Psoas muscle (tissue), 8 donors: ENCODE measurements at regions of chr12 and their contacts with region 1.

Region 1: GRCh38 chr12:108514973-108515814 is at the start of gene FICD:
- DNase-seq: peak; percentile 100
- ATAC-seq: peak; percentile 92 to 98 (median 96)
- H3K4me3 ChIP-seq: peak within 1 kb of the TSS; percentile 93
- H3K27ac ChIP-seq: peak within 1 kb of the TSS; percentile 76
- H3K4me1 ChIP-seq: peaks cover 11% of the 10 kb centered on the region
- H3K27me3 ChIP-seq: no peaks in the 10 kb centered on the region
- CTCF ChIP-seq: no peak
- total RNA-seq, gene FICD: 1.6 to 4.2 (median 2.8) TPM

Region 2: GRCh38 chr12:107685360-107686248 is 829.6 kb before region 1 on chr12 and contains the start of gene PWP1:
- intact Hi-C with region 1: loop called in 1 of 2 experiments (anchors 10 kb)
- DNase-seq: peak; percentile 95 to 97
- ATAC-seq: peak; percentile 97 to 98 (median 97)
- H3K4me3 ChIP-seq: peak within 1 kb of the TSS; percentile 99
- H3K27ac ChIP-seq: peak within 1 kb of the TSS; percentile 92
- H3K4me1 ChIP-seq: peaks cover 12% of the 10 kb centered on the region
- H3K27me3 ChIP-seq: no peaks in the 10 kb centered on the region
- CTCF ChIP-seq: no peak
- total RNA-seq, gene PWP1: 15.6 to 20.5 (median 19.5) TPM

Region 3: GRCh38 chr12:107760809-107761501 is 754.2 kb before region 1 on chr12 and contains the start of gene PRDM4:
- intact Hi-C with region 1: loop called (anchors 5 kb)
- DNase-seq: peak; percentile 96 to 97
- ATAC-seq: peak; percentile 100
- H3K4me3 ChIP-seq: peak within 1 kb of the TSS; percentile 81
- H3K27ac ChIP-seq: peak within 1 kb of the TSS; percentile 77
- H3K4me1 ChIP-seq: peaks cover 22% of the 10 kb centered on the region
- H3K27me3 ChIP-seq: no peaks in the 10 kb centered on the region
- CTCF ChIP-seq: peak; percentile 36
- total RNA-seq, gene PRDM4: 11.3 to 15.7 (median 13.2) TPM

Region 4: GRCh38 chr12:107917912-107918800 is 597.0 kb before region 1 on chr12:
- intact Hi-C with region 1: loop called in 1 of 2 experiments (anchors 5 kb)
- DNase-seq: no peak
- ATAC-seq: no peak
- H3K4me3 ChIP-seq: no peak overlapping the region
- H3K27ac ChIP-seq: no peak overlapping the region
- H3K4me1 ChIP-seq: no peaks in the 10 kb centered on the region
- H3K27me3 ChIP-seq: peaks cover 0 to 8% (median 0%) of the 10 kb centered on the region in 3 donors
- CTCF ChIP-seq: peak; percentile 48

Region 5: DNA sequence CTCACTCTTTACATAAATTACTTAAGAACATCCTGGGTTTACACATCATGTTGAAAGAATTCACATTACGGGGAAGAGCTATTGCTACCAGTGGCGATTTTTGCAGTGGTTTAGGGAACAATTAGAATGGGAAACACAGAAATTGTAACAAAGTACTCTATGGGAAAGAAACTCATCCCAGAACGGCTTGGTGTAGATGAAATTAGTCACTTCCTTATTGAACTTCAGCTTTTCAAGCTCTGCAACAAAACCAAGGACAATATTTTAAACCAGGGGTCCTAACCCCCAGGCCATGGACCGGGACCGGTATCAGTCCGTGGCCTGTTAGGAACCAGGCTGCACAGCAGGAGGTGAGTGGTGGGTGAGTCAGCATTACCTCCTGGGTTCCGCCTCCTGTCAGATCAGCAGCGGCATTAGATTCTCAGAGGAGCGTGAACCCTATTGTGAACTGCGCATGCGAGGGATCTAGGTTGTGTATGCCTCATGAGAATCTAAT is 32.4 kb before region 1 on chr12:
- intact Hi-C with region 1: no loop called
- DNase-seq: no peak
- ATAC-seq: no peak
- H3K4me3 ChIP-seq: no peak overlapping the region
- H3K27ac ChIP-seq: no peak overlapping the region
- H3K4me1 ChIP-seq: no peaks in the 10 kb centered on the region
- H3K27me3 ChIP-seq: peaks cover 0 to 2% (median 0%) of the 10 kb centered on the region in 3 donors
- CTCF ChIP-seq: no peak

Region 6: DNA sequence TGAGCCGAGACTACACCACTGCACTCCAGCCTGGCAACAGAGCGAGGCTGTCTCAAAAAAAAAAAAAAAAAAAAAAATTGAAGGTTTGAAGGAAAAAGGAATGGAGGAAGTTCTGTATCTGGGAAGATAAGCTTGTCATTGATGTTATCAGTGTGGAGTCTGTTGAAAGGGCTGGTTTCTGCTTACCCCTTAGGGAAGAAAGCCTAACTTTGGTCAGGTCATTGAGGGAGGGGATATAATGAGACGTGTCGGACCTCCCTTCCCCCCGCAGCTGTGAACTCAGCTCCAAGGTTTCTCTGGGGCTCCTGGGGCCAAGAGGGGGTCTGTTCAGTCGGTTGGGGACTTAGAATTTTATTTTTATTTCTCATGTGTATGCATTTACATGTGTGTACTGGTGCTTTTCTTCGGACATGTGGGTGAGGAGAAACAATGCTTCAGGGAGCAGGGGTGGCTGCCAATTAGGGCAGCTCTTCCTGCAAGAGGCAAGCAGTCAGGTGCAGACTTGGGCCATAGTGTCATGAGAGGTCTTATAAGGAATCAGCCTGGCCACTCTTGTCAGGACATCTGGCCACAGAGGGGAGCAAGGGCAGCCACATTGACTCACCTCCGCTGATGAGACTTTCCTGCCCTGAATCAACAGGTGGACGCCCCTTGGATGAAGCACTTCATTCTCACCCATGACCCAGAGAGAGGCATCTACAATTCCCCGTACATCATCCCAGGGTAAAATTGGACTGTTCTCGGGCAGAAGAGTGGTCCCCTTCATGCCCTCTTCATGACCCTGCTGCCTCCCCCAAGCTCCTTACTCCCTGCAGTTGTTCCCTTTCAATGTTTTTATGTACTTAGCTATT is 381.4 kb after region 1 on chr12:
- intact Hi-C with region 1: no loop called
- DNase-seq: no peak
- ATAC-seq: no peak
- H3K4me3 ChIP-seq: no peak overlapping the region
- H3K27ac ChIP-seq: no peak overlapping the region
- H3K4me1 ChIP-seq: no peaks in the 10 kb centered on the region
- H3K27me3 ChIP-seq: peaks cover 0 to 11% (median 0%) of the 10 kb centered on the region in 3 donors
- CTCF ChIP-seq: no peak